ENCODE measurements at regions of chr6 and their contacts with region 1.

Region 1: DNA sequence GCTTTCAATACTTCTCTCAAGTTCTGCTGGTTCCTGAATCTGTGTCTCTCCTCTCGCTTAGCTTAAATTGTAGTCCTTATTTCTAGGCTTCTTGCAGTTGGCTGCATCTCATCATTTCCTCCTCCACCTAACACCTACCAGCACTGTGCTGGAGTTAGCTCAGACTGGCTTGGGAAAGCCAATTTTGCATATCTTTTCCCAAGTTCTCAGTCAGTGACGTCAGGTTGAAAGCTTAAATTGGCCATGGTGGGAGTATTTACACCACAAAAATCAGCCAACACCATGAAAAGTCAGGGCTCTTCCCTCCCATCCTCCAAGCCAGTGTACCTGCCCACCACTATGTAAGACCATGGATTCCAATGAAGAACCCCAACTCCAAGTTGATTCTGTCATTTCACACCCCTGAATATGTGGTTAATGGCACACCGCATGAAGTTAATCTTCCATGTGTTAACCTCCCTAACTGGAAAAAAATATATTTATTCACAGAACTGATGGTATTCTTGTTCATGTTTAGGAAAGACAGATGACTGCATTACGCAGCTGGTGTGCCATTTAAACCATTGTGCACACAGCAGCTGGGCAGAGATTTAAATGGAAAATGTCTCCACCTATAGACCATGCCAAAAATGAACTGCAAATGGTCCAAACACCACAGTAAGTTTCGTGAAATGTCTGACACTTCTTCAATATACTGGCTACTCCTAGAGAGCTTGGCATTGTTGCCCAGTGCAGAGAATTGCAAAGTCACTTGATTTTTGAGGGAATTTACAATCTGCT is 274.1 kb upstream of the MAP3K7 start:
- DNase-seq: no peak
- H3K4me3 Mint-ChIP-seq: no peak overlapping the region
- H3K27ac Mint-ChIP-seq: no peak overlapping the region
- H3K4me1 Mint-ChIP-seq: no peaks in the 10 kb centered on the region
- H3K27me3 Mint-ChIP-seq: no peaks in the 10 kb centered on the region

Region 2: GRCh38 chr6:90610751-90611542 is 250.1 kb before region 1 on chr6:
- CTCF ChIA-PET with region 1: no interaction called
- POLR2A ChIA-PET with region 1: no interaction called
- intact Hi-C with region 1: loop called (anchors 10 kb)
- DNase-seq: peak; percentile 49
- H3K4me3 Mint-ChIP-seq: peak overlapping the region; percentile 65
- H3K27ac Mint-ChIP-seq: no peak overlapping the region
- H3K4me1 Mint-ChIP-seq: peaks cover 10% of the 10 kb centered on the region
- H3K27me3 Mint-ChIP-seq: peaks cover 53% of the 10 kb centered on the region

Region 3: GRCh38 chr6:90890683-90891330 is 29.8 kb after region 1 on chr6:
- CTCF ChIA-PET with region 1: no interaction called
- POLR2A ChIA-PET with region 1: no interaction called
- intact Hi-C with region 1: no loop called
- DNase-seq: no peak
- H3K4me3 Mint-ChIP-seq: no peak overlapping the region
- H3K27ac Mint-ChIP-seq: no peak overlapping the region
- H3K4me1 Mint-ChIP-seq: no peaks in the 10 kb centered on the region
- H3K27me3 Mint-ChIP-seq: peaks cover 2% of the 10 kb centered on the region